GM18951 (cell line): ENCODE measurements at regions of chr9 and their contacts with region 1.

Region 1: GRCh38 chr9:35790385-35791296 is 750 bp upstream of the NPR2 start:
- POLR2A ChIP-seq: no peak

Region 2: GRCh38 chr9:35882263-35882848 is 91.7 kb after region 1 on chr9:
- in situ Hi-C with region 1: loop called (anchors 25 kb)
- POLR2A ChIP-seq: no peak